CD4-positive, alpha-beta T cell (primary cell): ENCODE measurements at regions of chr7 and their contacts with region 1.

Region 1: GRCh38 chr7:6530626-6531491 is 20.4 kb downstream of the GRID2IP start:
- DNase-seq: peak; percentile 27 to 79 (median 58)
- ATAC-seq: peak; percentile 79
- H3K4me3 ChIP-seq: peak overlapping the region; percentile 62
- H3K4me3 Mint-ChIP-seq: peak overlapping the region; percentile 84
- H3K27ac ChIP-seq: no peak overlapping the region
- H3K27ac Mint-ChIP-seq: no peak overlapping the region
- H3K4me1 ChIP-seq: peaks cover 27% of the 10 kb centered on the region
- H3K4me1 Mint-ChIP-seq: peaks cover 18% of the 10 kb centered on the region
- H3K27me3 ChIP-seq: peaks cover 28% of the 10 kb centered on the region in 2 experiments
- H3K27me3 Mint-ChIP-seq: peaks cover 17% of the 10 kb centered on the region
- CTCF ChIP-seq: no peak

Region 2: DNA sequence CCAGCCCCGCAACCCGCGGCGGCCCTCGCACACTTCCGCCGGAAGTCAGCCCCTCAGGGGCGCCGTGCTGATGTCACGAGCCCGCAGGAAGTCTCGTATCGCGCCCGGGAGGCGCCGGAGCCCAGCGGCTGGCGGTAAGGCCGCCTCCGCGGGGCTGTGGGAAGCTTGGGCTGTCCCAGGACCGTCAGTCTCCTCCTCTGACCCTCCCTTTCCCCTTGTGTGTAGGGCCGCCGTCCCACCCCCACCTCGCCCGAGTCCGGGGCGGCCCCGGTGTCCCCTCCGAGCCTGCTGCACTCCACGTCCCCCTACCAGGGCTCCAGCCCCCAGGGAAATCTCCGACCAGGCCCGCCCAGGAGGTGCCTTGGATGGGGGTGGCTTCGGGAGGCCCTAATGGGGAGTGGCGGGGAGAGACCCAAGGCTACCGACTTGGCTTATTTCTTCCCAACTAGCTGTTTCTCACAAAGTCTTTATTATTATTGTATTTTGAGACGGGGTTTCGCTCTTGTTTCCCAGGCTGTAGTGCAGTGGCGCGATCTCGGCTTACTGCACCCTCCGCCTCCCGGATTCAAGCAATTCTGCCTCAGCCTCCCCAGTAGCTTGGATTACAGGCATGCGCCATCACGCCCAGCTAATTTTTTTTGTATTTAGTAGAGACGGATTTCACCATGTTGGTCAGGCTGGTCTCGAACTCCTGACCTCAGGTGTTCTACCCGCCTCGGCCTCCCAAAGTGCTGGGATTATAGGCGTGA is 46.7 kb after region 1 on chr7 and contains the start of gene ZDHHC4:
- CTCF ChIA-PET with region 1: interaction called, 3 read pairs
- POLR2A ChIA-PET with region 1: no interaction called
- intact Hi-C with region 1: loop called in 1 of 2 experiments (anchors 5 kb)
- DNase-seq: peak; percentile 65 to 94 (median 82)
- ATAC-seq: peak; percentile 92
- H3K4me3 ChIP-seq: peak within 1 kb of the TSS; percentile 83
- H3K4me3 Mint-ChIP-seq: peak within 1 kb of the TSS; percentile 93
- H3K27ac ChIP-seq: peak within 1 kb of the TSS; percentile 89 to 95
- H3K27ac Mint-ChIP-seq: peak within 1 kb of the TSS; percentile 88
- H3K4me1 ChIP-seq: peaks cover 17% of the 10 kb centered on the region
- H3K4me1 Mint-ChIP-seq: peaks cover 14% of the 10 kb centered on the region
- H3K27me3 ChIP-seq: no peaks in the 10 kb centered on the region
- H3K27me3 Mint-ChIP-seq: no peaks in the 10 kb centered on the region
- CTCF ChIP-seq: no peak
- total RNA-seq, gene ZDHHC4: 32.1 to 32.9 TPM